Dorsolateral prefrontal cortex (tissue), 120 donors: ENCODE measurements at regions of chrX and their contacts with region 1.

Region 1: DNA sequence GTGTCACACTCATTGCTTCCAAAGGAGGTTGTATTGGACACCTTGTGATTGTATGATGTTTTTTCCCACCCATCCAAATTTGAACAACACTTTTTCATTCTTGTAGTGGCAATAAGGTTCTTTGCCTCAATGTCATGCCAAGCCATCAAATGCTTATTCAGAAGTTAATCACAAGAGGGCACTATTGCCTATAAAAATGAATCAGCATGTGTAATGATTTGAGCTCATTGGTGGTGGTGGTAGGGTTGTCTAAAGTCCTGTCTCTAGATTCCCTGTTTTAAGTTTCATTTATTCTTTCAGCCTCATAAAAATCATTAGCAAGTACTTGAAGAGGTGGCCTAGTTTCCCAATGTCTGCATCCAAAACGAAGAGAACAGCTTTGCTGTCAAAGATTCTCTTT is 37.0 kb downstream of the IRS4 start:
- DNase-seq: no peak
- H3K4me3 ChIP-seq: no peak overlapping the region
- H3K27ac ChIP-seq: peak overlapping the region in 4 of 59 donors; percentile 14 to 45 (median 25)
- H3K27me3 ChIP-seq: peaks cover 0 to 50% (median 0%) of the 10 kb centered on the region in 45 donors
- CTCF ChIP-seq: peak in 54 of 56 donors; percentile 10 to 75 (median 50)

Region 2: DNA sequence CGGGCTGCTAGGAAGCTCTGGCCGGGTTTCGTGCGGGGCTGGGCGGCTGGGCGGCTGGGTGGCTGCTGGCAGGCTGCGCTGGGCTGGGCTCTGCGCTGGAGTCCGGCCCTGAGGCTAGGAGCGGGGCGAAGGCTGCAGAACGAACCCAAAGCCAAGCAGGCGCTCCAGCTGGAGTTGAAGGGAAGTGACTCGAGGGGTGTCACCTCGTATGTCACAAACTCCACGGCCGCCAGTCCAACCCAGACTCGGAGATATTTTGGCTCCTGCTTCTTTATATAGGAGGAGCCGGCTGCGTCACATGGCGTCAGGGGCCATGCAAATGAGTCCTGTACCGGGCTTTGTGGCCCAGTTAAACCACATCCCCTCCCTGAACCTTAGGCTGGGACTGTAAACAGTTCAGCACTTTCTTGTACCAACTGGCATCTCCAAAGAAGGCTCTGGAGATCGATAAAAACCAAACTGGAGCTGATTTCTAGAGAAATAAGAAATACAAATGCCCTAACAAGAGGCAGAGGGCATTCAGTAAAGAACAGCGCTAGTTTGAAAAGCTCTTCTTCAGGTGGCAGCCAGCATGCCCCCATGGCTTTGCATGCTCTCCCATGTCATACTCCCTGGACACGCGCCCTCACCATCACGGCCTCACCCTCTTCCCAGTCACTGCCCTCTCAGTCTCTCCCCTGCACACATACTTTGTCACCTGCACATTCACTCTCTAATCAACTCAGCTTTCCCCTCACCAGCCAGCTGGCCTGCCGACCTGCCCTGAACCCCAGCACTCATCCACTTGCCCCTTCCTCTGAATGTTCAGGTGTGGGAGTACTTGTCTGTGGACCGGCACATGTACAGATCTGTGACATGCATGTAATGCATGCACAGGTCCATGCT is 982.3 kb before region 1 on chrX:
- intact Hi-C with region 1: no loop called
- DNase-seq: peak; percentile 57 to 86 (median 83)
- H3K4me3 ChIP-seq: peak overlapping the region; percentile 52 to 80 (median 69)
- H3K27ac ChIP-seq: peak overlapping the region; percentile 76 to 98 (median 91)
- H3K27me3 ChIP-seq: peaks cover 0 to 91% (median 38%) of the 10 kb centered on the region in 45 donors
- CTCF ChIP-seq: peak in 1 of 56 donors; percentile 15

Region 3: DNA sequence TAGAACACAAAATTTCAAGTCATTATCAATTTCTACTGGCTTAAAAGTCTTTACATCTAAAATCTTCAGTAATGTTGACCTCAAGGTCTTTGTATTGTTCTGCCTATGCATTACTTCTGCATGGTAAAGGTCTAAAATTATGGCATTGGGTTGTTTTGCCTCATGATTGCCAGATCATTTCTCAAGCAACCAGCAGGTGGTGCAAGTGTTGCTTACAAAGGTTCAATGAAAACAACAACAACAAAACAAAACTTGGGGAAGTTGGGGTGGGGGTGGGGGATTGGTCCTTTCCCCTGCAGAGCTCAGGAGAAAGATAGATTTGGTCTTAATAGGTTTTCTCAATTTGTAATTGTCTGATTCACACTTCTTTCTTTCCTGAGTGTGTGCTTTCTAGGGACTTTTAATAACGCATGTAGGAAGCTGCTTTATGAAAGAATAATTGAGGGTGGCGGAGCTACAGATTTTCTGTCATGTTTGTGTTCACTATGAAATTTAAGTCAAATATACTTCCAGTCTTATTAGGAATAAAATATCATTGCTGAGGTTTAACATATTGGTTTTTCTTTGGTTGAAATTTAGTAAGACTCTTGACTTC is 114.7 kb before region 1 on chrX:
- intact Hi-C with region 1: loop called in 1 of 2 experiments (anchors 5 kb)
- DNase-seq: peak in 4 of 10 donors; percentile 18 to 73 (median 51)
- H3K4me3 ChIP-seq: peak overlapping the region in 58 of 59 donors; percentile 4 to 75 (median 52)
- H3K27ac ChIP-seq: peak overlapping the region in 58 of 59 donors; percentile 18 to 98 (median 92)
- H3K27me3 ChIP-seq: peaks cover 0 to 39% (median 0%) of the 10 kb centered on the region in 45 donors
- CTCF ChIP-seq: peak; percentile 11 to 72 (median 51)

Region 4: GRCh38 chrX:109475174-109475891 is 776.0 kb after region 1 on chrX:
- intact Hi-C with region 1: loop called in 1 of 2 experiments (anchors 5 kb)
- DNase-seq: peak; percentile 11 to 62 (median 46)
- H3K4me3 ChIP-seq: peak overlapping the region in 35 of 59 donors; percentile 1 to 53 (median 29)
- H3K27ac ChIP-seq: no peak overlapping the region
- H3K27me3 ChIP-seq: peaks cover 0 to 97% (median 49%) of the 10 kb centered on the region in 45 donors
- CTCF ChIP-seq: peak in 53 of 56 donors; percentile 40 to 83 (median 62)